ENCODE measurements at regions of chr17 and their contacts with region 1.

Region 1: GRCh38 chr17:32327911-32328310 is 14.1 kb downstream of the C17orf75 start:
- DNase-seq: no peak
- H3K4me3 ChIP-seq: no peak overlapping the region
- H3K27ac ChIP-seq: no peak overlapping the region
- H3K4me1 ChIP-seq: 0 out of 2 replicates have a peak, but pooled peaks cover 5% of the 10 kb centered on the region
- H3K27me3 ChIP-seq: no peaks in the 10 kb centered on the region

Region 2: DNA sequence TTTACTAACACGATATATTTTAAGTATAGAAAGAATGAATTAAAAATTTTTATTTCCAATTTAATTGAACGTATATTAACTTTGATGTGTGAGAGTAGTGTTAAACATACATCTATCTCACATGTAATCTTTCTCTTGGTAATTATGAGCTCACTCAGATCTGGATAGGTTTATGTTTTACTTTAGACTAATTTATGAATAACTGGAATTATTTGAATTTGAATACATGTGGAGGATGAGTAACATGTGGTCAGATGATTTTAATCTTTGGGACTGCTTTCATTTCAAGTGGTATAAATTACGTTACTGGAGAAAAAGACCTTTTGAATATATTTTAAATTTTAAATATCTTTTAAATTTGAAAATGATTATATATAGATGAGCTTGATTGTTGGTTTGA is 112.2 kb before region 1 on chr17:
- in situ Hi-C with region 1: no loop called
- DNase-seq: no peak
- H3K4me3 ChIP-seq: no peak overlapping the region
- H3K27ac ChIP-seq: no peak overlapping the region
- H3K4me1 ChIP-seq: no peaks in the 10 kb centered on the region
- H3K27me3 ChIP-seq: no peaks in the 10 kb centered on the region

Region 3: DNA sequence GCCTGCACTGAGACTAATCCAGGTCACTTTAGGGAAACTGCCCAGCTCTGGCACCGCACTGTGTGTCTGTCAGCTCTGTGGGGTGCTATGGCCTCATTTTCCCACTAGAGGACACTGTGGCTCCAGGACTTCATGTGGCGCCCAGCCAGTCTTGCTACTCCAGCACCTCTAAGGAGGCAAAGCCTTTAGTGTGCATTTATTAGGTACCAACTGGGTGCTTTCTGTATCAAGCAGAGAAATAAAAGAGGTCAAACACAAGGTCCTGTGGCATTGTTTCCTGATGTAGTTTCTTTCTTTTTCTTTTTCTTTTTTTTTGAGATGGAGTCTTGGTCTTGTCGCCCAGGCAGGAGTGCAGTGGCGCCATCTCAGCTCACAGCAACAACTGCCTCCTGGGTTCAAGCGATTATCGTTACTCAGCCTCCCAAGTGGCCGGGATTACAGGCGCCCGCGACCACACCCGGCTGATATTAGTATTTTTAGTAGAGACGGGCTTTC is 74.7 kb before region 1 on chr17:
- in situ Hi-C with region 1: loop called (anchors 5 kb)
- DNase-seq: peak; percentile 89
- H3K4me3 ChIP-seq: no peak overlapping the region
- H3K27ac ChIP-seq: no peak overlapping the region
- H3K4me1 ChIP-seq: 0 out of 2 replicates have a peak, but pooled peaks cover 6% of the 10 kb centered on the region
- H3K27me3 ChIP-seq: no peaks in the 10 kb centered on the region